Activated B cell treated with CpG ODN at 0.5 μM for 24 hours (primary cell): ENCODE measurements at regions of chr2 and their contacts with region 1.

Region 1: DNA sequence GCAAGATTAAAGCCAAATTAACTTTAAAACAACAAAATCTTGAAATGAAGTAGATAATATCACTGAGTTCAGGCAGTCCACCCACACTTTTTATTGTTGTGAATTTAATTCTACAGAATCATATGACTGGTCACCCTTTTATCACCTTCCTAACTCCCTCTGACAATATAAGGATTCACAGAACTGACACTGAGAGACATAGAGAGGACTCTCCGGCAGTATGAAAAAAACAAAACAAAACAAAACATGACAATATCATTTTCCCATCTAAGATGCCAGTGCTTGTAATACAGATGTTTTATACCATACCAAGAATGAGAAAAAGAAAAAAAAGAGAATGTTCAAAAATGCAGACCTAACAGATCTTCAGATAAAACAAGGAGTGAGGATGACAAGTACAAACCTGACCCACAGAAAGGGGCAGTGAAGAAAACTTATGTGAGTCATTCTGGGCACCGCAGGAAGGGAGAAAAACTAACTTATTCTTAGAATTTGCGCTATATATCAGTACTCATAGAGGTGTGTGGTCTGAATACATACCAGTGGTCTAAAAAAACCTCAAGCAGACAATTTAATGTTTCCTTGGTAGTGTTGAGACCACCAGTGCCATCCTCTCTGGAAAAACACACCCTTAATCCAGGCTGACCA is 136.6 kb downstream of the ZAP70 start:
- DNase-seq: no peak
- ATAC-seq: no peak
- H3K4me3 Mint-ChIP-seq: peak overlapping the region; percentile 9
- H3K27ac Mint-ChIP-seq: peak overlapping the region; percentile 5
- H3K4me1 Mint-ChIP-seq: peaks cover 73% of the 10 kb centered on the region
- H3K27me3 Mint-ChIP-seq: no peaks in the 10 kb centered on the region
- CTCF ChIP-seq: no peak

Region 2: DNA sequence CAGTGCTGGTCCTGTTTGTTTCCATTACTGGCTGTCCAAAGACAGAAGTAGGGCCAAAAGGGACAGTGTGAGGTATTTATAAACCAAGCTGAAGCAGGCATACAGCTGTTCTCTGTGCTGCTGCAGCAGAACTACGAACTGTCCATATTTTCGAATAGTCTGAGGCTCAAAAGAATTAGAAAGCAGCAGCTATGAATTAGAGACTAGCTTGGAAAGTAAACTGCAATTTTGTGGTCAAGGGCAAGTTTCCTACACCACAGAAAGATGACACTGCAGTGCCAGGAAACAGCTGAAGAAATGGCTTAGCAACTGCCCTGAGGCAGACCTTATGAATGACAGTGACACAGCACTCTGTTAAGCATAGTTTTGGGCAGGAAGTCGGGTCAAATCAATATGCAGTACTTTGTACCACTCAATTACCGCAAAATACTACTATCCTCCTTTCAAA is 20.4 kb after region 1 on chr2:
- CTCF ChIA-PET with region 1: no interaction called
- POLR2A ChIA-PET with region 1: no interaction called
- intact Hi-C with region 1: loop called (anchors 2 kb)
- DNase-seq: no peak
- ATAC-seq: peak; percentile 93
- H3K4me3 Mint-ChIP-seq: no peak overlapping the region
- H3K27ac Mint-ChIP-seq: peak overlapping the region; percentile 30
- H3K4me1 Mint-ChIP-seq: peaks cover 54% of the 10 kb centered on the region
- H3K27me3 Mint-ChIP-seq: no peaks in the 10 kb centered on the region
- CTCF ChIP-seq: no peak

Region 3: DNA sequence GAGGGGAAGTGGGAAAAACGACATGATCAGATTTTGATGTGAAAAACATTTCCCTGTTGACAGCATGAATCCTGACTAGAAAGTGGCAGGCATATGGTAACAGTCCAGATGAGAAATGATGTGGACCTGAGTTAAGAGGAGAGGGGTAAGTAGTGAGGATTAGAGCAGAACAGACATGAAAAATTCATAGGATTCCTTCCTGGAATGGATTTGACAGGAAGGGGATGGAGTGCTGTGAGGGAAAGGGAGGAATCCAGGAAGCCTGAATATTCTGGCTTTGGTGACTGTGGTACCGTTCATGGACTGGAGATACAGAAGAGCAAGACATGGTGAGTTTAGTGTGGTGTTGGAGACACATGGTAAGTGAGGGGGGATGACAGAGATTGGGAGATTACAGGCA is 30.3 kb after region 1 on chr2:
- CTCF ChIA-PET with region 1: no interaction called
- POLR2A ChIA-PET with region 1: no interaction called
- intact Hi-C with region 1: loop called (anchors 5 kb)
- DNase-seq: no peak
- ATAC-seq: no peak
- H3K4me3 Mint-ChIP-seq: no peak overlapping the region
- H3K27ac Mint-ChIP-seq: no peak overlapping the region
- H3K4me1 Mint-ChIP-seq: peaks cover 62% of the 10 kb centered on the region
- H3K27me3 Mint-ChIP-seq: no peaks in the 10 kb centered on the region
- CTCF ChIP-seq: no peak